Activated CD8-positive, alpha-beta memory T cell treated with anti-CD3 and anti-CD28 coated beads, Interleukin-2, amount 10 ng/mL, durations not matched to agents 7 days and 5 days (primary cell): ENCODE measurements at regions of chr9 and their contacts with region 1.

Region 1: GRCh38 chr9:21078717-21079116 is 975 bp upstream of the IFNB1 start:
- DNase-seq: no peak
- ATAC-seq: peak; percentile 54
- H3K4me3 Mint-ChIP-seq: no peak overlapping the region
- H3K27ac Mint-ChIP-seq: peak overlapping the region; percentile 12
- H3K4me1 Mint-ChIP-seq: peaks cover 27% of the 10 kb centered on the region
- H3K27me3 Mint-ChIP-seq: peaks cover 7% of the 10 kb centered on the region

Region 2: DNA sequence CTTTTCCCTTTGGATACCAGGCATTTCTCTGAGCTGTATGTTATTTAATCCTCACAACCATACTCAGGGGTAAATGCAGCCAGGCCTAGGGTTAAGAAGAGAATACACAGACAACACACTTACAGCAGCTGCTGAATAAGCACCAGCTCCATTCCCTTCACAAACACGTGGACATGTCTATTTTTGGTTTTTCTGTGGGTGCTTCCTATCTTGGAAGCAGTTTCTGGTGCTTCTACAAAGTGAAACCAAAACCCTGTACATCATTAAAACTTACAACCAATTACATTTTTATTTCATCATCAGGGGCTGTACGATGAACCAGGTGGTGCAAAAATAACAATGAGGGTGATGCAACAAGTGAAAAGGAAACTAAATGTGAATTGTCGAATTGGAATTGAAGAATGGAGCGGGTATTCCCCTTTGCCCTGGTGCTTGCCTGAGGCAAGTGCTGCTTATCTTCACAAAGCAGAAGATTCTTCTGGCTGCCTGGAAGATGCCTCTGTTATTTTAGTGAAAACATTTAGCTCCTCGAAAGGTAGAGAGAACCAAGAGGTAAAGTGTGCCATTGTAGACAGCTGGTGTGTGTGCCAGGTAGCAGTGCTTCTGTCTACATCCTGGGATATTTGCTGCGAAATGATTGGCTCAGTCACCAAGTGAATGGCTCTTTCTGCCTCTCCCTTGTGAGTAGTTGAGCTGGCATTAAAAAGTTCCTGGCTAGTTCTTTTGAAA is 17.6 kb after region 1 on chr9:
- CTCF ChIA-PET with region 1: interaction called, 13 read pairs
- DNase-seq: peak; percentile 59
- ATAC-seq: peak; percentile 87
- H3K4me3 Mint-ChIP-seq: peak overlapping the region; percentile 67
- H3K27ac Mint-ChIP-seq: peak overlapping the region; percentile 81
- H3K4me1 Mint-ChIP-seq: peaks cover 35% of the 10 kb centered on the region
- H3K27me3 Mint-ChIP-seq: no peaks in the 10 kb centered on the region

Region 3: GRCh38 chr9:21144603-21145002 is 65.9 kb after region 1 on chr9:
- CTCF ChIA-PET with region 1: no interaction called
- DNase-seq: no peak
- ATAC-seq: peak; percentile 59
- H3K4me3 Mint-ChIP-seq: peak overlapping the region; percentile 7
- H3K27ac Mint-ChIP-seq: peak overlapping the region; percentile 84
- H3K4me1 Mint-ChIP-seq: peaks cover 35% of the 10 kb centered on the region
- H3K27me3 Mint-ChIP-seq: no peaks in the 10 kb centered on the region